Activated naive CD4-positive, alpha-beta T cell treated with anti-CD3 and anti-CD28 coated beads for 36 hours (primary cell): ENCODE measurements at regions of chr12 and their contacts with region 1.

Region 1: DNA sequence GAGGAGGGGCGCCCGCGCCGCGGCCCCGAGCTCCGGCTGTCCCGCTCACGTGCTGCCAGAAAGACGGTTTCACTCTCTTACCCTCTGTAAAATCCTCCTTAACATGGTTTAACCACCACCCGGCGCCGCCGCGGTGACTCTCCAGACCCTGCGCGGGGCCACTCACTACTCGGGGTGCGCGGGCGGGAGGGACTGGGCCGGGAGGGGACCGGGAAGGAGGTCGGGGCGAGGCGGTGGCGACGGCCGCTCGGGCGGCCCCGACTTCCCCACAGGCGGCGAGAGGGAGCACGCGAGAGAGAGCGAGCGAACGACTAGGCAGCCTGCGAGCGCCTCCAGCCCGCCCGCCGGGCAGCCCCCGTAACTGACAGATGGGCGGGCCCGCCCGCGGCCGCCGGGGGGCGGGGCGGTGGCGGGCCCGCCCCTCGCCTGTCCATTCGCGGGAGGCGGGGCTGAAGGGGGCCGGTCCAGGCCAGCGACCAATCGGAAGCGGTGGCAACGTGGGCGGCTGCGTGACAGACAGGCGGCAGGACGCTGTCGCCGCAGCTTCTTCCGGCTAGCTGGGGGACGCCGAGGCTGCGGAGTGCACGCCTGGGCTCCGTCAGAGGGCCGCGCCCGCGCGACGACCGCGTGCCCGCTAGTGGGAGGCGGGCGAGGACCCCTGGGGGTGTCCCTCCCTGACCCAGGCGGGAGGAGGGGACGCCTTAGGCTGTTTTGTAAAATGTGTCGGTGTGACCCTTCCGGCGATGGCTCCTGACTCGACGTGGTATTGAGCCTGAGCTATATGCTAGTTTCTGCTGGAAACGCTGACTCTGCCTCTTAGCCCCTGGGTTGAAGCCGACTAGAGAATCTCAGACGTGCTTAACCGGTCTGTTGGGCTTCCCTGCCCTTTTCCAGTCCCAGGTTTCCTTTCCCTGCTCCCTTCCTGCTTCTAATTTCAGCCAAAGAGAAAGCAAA is at the start of gene EEA1:
- DNase-seq: peak; percentile 97
- H3K4me3 Mint-ChIP-seq: peak within 1 kb of the TSS; percentile 90
- H3K27ac Mint-ChIP-seq: peak within 1 kb of the TSS; percentile 93
- H3K4me1 Mint-ChIP-seq: peaks cover 28% of the 10 kb centered on the region
- H3K27me3 Mint-ChIP-seq: no peaks in the 10 kb centered on the region
- total RNA-seq, gene EEA1: 15.6 to 17.6 TPM

Region 2: DNA sequence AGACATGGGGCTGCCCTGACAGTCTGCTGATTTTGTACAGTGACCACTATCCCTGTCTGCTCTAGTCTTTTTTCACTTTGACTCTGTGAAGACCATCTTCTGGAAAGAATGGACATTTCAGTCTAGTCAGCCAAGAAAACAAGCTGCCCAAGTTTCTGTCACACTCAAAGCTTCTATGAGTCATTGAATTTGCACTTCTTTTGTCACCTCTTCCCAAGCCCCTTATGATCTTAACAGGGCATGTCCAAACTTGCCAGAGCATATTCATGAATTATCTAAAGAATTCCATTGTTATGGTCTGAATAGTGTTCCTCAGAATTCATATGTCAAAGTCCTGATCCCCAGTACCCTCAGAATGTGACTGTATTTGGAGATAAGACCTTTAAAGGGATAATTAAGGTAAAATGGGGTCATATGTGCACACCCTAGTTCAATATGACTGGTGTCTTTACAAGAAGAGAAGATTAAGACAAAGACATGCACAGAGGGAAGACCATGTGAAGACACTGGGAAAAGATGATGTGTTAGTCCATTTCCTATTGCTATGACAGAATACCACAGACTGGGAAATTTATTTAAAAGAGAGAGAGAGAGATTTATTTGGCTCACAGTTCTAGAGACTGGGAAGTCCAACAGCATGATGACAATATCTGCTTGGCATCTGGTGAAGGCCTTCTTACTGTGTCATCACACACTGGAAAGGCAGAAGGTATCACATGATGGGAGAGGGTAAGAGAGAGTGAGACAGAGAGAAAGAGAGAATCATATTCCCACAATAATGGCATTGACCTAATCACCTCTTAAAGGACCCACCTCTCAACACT is 1026.2 kb before region 1 on chr12:
- CTCF ChIA-PET with region 1: no interaction called
- intact Hi-C with region 1: no loop called
- DNase-seq: no peak
- H3K4me3 Mint-ChIP-seq: no peak overlapping the region
- H3K27ac Mint-ChIP-seq: peak overlapping the region; percentile 38
- H3K4me1 Mint-ChIP-seq: peaks cover 36% of the 10 kb centered on the region
- H3K27me3 Mint-ChIP-seq: no peaks in the 10 kb centered on the region

Region 3: DNA sequence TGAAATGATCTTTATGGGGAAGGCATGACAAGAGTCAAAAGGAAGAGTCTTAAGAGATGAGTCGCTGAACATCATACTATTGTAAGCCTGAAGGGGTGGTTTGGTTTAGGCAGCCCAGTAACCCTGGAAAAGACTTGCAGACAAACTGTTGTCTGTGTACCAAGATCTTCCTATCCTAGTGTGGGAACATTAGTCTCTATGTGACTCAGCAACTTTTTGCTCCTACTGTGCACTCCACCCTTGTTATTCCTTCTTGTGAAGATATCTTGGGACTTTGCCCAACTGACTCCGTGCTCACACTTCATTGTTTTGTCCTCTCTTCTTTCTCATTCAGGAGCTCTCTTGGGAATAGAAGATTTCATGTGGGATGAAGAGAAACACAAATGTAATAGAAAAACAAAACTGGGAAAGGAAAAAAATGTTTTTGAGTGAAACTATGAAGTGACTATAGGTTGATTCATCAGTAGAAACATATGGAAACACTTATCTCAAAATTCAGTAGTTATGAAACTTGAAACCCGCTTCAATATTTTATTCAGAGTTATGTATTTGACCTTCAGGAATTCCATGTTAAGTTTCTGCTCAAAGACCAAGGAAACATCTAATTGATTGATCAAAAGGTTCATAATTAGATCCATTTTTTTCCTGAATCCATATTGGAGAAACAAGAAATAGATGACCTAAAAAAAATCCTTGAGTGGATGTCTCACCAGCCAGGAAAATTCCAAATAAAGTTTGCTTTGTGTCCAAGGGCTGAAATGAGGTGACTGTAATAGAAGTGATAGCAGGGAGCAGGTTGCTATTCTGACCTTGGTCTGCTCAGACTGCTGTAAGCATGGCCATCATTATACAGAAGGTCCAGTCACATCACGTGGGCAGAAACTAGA is 850.8 kb before region 1 on chr12:
- CTCF ChIA-PET with region 1: no interaction called
- intact Hi-C with region 1: loop called (anchors 5 kb)
- DNase-seq: peak; percentile 49
- H3K4me3 Mint-ChIP-seq: no peak overlapping the region
- H3K27ac Mint-ChIP-seq: peak overlapping the region; percentile 77
- H3K4me1 Mint-ChIP-seq: peaks cover 78% of the 10 kb centered on the region
- H3K27me3 Mint-ChIP-seq: no peaks in the 10 kb centered on the region

Region 4: GRCh38 chr12:92784795-92785562 is 144.3 kb before region 1 on chr12:
- CTCF ChIA-PET with region 1: interaction called, 13 read pairs
- intact Hi-C with region 1: loop called (anchors 1 kb)
- DNase-seq: peak; percentile 35
- H3K4me3 Mint-ChIP-seq: no peak overlapping the region
- H3K27ac Mint-ChIP-seq: no peak overlapping the region
- H3K4me1 Mint-ChIP-seq: peaks cover 2% of the 10 kb centered on the region
- H3K27me3 Mint-ChIP-seq: no peaks in the 10 kb centered on the region

Region 5: GRCh38 chr12:93109551-93110203 is 180.4 kb after region 1 on chr12:
- CTCF ChIA-PET with region 1: no interaction called
- intact Hi-C with region 1: loop called (anchors 1 kb)
- DNase-seq: peak; percentile 83
- H3K4me3 Mint-ChIP-seq: no peak overlapping the region
- H3K27ac Mint-ChIP-seq: peak overlapping the region; percentile 91
- H3K4me1 Mint-ChIP-seq: peaks cover 32% of the 10 kb centered on the region
- H3K27me3 Mint-ChIP-seq: no peaks in the 10 kb centered on the region

Region 6: GRCh38 chr12:93441617-93442410 is 512.6 kb after region 1 on chr12 and contains the start of gene UBE2N:
- CTCF ChIA-PET with region 1: no interaction called
- intact Hi-C with region 1: loop called (anchors 1 kb)
- DNase-seq: peak; percentile 96
- H3K4me3 Mint-ChIP-seq: peak within 1 kb of the TSS; percentile 95
- H3K27ac Mint-ChIP-seq: peak within 1 kb of the TSS; percentile 94
- H3K4me1 Mint-ChIP-seq: peaks cover 46% of the 10 kb centered on the region
- H3K27me3 Mint-ChIP-seq: no peaks in the 10 kb centered on the region
- total RNA-seq, gene UBE2N: 143 TPM

Region 7: GRCh38 chr12:94262228-94263010 is 1333.2 kb after region 1 on chr12:
- CTCF ChIA-PET with region 1: no interaction called
- intact Hi-C with region 1: loop called (anchors 5 kb)
- DNase-seq: peak; percentile 83
- H3K4me3 Mint-ChIP-seq: peak overlapping the region; percentile 89
- H3K27ac Mint-ChIP-seq: peak overlapping the region; percentile 96
- H3K4me1 Mint-ChIP-seq: peaks cover 31% of the 10 kb centered on the region
- H3K27me3 Mint-ChIP-seq: no peaks in the 10 kb centered on the region